ENCODE measurements at regions of chr17 and their contacts with region 1.

Region 1: GRCh38 chr17:8156246-8156992 is 4.2 kb upstream of the PER1 start:
- DNase-seq: peak; percentile 99
- ATAC-seq: peak; percentile 77
- H3K4me3 Mint-ChIP-seq: no peak overlapping the region
- H3K27ac Mint-ChIP-seq: no peak overlapping the region
- H3K4me1 Mint-ChIP-seq: peaks cover 54% of the 10 kb centered on the region
- H3K27me3 Mint-ChIP-seq: no peaks in the 10 kb centered on the region

Region 2: DNA sequence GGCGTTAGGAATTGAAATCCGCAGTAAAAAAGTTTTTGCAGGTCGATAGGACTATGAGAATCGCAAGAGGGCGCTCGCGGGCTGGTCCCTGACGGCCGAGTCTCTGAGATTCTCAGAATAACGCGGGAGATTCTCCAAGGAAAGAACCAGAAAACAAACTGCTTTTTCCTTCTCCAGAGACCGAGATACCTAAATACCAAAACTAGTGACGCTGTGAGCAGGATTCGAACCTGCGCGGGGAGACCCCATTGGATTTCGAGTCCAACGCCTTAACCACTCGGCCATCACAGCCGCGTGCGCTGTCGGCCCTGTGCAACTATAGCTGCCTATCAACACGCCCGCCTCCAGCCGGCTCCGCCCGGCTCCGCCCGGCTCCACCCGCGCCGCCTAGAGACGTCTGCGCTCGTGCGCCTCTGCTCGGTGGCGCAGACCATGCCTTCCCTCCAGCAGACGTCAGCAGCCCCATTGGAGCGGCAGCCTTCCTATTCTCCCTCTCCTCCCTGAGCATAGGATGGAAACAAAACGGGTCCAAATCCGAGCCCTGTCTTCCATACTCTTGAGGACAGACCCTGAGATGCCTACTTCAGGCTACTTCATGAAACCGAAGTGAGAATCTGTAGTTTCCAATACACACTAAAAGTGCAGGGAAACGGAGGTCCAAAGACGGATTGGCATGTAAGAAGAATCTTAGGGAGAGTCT is 17.6 kb before region 1 on chr17:
- POLR2A ChIA-PET with region 1: interaction called, 39 read pairs
- DNase-seq: peak; percentile 97
- ATAC-seq: peak; percentile 97
- H3K4me3 Mint-ChIP-seq: no peak overlapping the region
- H3K27ac Mint-ChIP-seq: no peak overlapping the region
- H3K4me1 Mint-ChIP-seq: peaks cover 4% of the 10 kb centered on the region
- H3K27me3 Mint-ChIP-seq: peaks cover 6% of the 10 kb centered on the region

Measured in activated naive CD8-positive, alpha-beta T cell treated with anti-CD3 and anti-CD28 coated beads, Interleukin-2, amount 10 ng/mL, durations not matched to agents 7 days and 5 days (primary cell).